ENCODE measurements at regions of chr10 and their contacts with region 1.

Region 1: DNA sequence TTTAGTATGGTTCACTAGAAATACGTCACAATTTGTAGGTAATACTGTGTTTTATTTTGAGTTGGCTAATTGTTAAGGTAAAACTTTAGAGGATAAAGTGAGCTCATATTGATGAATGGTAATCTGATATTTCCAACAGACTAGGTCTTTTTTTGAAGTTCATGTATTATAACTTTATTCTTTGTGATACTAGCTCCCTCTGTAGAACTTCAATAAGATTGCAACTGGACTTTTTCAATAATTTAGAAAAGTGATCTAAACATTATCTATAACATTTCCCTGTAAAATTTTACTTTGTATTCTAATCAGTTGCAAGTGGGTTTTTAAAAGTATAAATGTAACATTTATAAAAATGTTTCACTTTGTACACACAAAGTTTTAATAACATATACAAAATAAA is 83.5 kb downstream of the ADK start:
- DNase-seq: no peak
- H3K4me3 Mint-ChIP-seq: no peak overlapping the region
- H3K27ac Mint-ChIP-seq: no peak overlapping the region
- H3K4me1 Mint-ChIP-seq: peaks cover 7% of the 10 kb centered on the region
- H3K27me3 Mint-ChIP-seq: no peaks in the 10 kb centered on the region

Region 2: DNA sequence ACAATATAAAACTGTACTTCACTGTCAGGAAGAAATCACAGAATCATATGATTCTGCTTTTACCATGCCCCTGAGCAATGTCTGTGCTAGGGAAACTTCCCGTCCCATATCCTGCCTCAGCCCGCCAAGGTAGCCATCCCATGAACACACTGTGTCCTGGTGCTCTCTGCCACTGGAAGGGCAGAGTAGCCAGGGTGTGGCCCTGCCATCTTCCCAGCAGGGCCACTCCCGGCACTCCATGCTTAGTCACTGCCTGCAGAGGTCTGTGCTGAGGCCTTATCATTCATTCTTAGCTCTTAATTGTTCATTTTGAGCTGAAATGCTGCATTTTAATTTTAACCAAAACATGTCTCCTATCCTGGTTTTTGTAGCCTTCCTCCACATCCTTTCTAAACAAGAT is 115.8 kb before region 1 on chr10:
- CTCF ChIA-PET with region 1: interaction called, 11 read pairs
- POLR2A ChIA-PET with region 1: no interaction called
- DNase-seq: no peak
- H3K4me3 Mint-ChIP-seq: no peak overlapping the region
- H3K27ac Mint-ChIP-seq: peak overlapping the region; percentile 40
- H3K4me1 Mint-ChIP-seq: peaks cover 5% of the 10 kb centered on the region
- H3K27me3 Mint-ChIP-seq: no peaks in the 10 kb centered on the region

Region 3: DNA sequence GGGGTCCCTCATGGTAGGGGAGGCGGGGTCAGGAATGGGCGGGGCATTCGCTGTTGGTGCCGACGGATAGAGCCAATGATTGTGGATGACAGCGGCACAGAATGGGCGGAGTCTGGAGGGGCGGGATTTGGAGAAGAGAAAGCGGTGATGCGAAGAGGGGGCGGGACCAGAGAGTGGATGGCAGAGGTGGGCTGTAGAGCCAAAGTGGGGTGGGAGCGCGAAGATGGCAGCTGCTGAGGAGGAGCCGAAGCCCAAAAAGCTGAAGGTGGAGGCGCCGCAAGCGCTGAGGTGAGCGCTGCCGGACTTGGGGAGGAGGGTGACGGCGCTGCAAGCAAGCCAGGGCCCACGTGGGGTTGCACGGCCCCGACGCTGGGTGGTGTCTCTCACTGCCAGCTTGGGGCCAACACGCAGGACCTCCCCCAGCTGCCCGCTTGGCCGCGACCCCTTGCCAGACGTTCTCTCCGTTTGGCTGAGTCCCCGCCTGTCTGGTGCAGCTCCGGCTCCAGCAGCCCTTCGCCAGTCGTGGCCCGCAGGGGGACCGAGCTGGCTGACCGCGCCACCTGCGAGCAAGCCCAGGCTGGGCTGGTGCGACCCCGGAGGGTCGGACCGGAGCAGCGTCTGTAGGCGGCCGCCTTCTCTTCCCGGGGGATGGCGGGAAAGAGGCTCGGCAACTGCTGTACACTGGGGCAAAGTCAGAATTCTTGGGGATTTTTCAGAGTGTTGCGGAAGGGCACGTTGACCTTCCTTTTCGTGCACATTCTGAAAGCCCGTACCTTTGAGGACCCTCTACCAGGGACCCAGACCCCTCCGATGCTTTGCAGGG is 83.3 kb before region 1 on chr10 and contains the start of gene ADK:
- CTCF ChIA-PET with region 1: interaction called, 14 read pairs
- POLR2A ChIA-PET with region 1: no interaction called
- DNase-seq: peak; percentile 100
- H3K4me3 Mint-ChIP-seq: no peak within 1 kb of the TSS
- H3K27ac Mint-ChIP-seq: peak within 1 kb of the TSS; percentile 48
- H3K4me1 Mint-ChIP-seq: peaks cover 38% of the 10 kb centered on the region
- H3K27me3 Mint-ChIP-seq: no peaks in the 10 kb centered on the region
- total RNA-seq, gene ADK: 29.3 to 31.8 TPM

Region 4: DNA sequence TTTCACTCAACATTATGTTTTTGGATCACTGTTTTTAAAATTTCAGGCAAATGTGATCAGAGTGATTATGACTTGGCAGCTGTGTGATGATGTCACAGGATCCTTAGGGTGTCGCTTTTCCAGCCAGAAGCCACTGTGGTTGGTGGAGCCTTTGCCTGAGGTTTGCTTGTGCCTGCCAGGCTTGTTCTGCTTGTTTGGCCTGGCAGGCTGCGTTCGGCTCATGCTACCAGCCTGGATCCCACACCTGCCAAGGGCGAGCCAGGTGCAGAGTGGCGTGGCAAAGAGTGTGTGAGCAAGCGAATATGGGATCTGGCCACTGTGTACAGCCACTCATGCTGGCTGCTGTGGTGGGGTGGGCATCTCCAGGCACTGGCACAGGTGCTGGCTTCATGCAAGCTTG is 27.8 kb before region 1 on chr10:
- CTCF ChIA-PET with region 1: no interaction called
- POLR2A ChIA-PET with region 1: no interaction called
- DNase-seq: no peak
- H3K4me3 Mint-ChIP-seq: no peak overlapping the region
- H3K27ac Mint-ChIP-seq: no peak overlapping the region
- H3K4me1 Mint-ChIP-seq: peaks cover 3% of the 10 kb centered on the region
- H3K27me3 Mint-ChIP-seq: no peaks in the 10 kb centered on the region

Region 5: DNA sequence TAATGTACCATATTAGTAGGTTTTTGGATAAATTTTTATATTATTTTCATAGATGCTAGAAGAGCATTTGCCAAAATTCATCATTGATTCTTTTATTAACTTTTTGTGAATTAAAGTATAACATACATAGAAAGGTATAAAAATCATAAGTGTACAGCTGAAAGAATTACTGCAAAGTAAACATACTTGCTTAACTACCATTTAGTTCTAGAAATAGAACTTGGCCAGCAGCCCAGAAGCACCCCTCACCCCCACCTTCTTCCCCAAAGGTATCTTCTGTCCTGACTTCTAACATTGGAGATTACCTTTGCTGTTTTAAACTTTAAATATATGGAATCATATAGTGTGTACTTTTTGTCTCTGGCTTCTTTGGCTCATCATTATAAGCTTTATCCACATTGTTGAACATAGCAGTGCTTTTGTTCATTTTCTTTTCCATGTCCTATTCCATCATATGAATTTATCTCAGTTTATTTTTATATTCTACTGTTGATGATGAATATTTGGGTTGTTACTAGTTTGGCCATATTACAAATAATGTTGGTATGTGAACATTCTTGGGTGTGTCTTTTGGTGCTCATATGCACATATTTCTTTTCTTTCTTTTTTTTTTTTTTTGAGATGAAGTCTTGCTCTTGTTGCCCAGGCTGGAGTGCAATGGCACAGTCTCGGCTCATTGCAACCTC is 59.3 kb after region 1 on chr10:
- CTCF ChIA-PET with region 1: no interaction called
- POLR2A ChIA-PET with region 1: no interaction called
- DNase-seq: no peak
- H3K4me3 Mint-ChIP-seq: no peak overlapping the region
- H3K27ac Mint-ChIP-seq: no peak overlapping the region
- H3K4me1 Mint-ChIP-seq: no peaks in the 10 kb centered on the region
- H3K27me3 Mint-ChIP-seq: no peaks in the 10 kb centered on the region

Region 6: DNA sequence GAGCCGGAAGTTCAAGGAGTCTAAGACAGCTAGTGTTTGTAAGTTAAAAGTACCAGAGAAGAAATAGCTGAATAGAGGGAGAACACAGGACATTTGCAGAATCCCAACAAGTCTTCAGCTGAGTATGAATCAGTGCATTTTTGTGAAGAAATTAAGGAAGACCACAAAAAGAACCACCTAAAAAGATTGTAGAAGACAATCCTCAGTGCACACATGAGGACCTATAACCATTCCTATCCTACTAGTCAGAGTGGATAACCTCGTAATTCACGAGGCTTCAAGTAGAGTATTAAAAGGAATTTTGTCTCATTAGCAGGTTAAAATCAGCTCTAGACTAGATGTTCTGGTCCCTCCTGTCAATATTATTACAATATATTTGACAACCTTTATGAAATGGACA is 296.4 kb after region 1 on chr10:
- CTCF ChIA-PET with region 1: no interaction called
- POLR2A ChIA-PET with region 1: no interaction called
- DNase-seq: no peak
- H3K4me3 Mint-ChIP-seq: no peak overlapping the region
- H3K27ac Mint-ChIP-seq: no peak overlapping the region
- H3K4me1 Mint-ChIP-seq: no peaks in the 10 kb centered on the region
- H3K27me3 Mint-ChIP-seq: no peaks in the 10 kb centered on the region